Endothelial cell of umbilical vein (primary cell): ENCODE measurements at regions of chr1 and their contacts with region 1.

Region 1: GRCh38 chr1:196660852-196661251 is 9.0 kb downstream of the CFH start:
- DNase-seq: peak; percentile 53
- H3K4me3 ChIP-seq: peak overlapping the region in 1 of 3 experiments; percentile 52
- H3K27ac ChIP-seq: no peak overlapping the region
- H3K4me1 ChIP-seq: no peaks in the 10 kb centered on the region
- H3K27me3 ChIP-seq: no peaks in the 10 kb centered on the region
- CTCF ChIP-seq: peak in 1 of 2 donors; percentile 4
- POLR2A ChIP-seq: no peak

Region 2: GRCh38 chr1:196317535-196318522 is 343.0 kb before region 1 on chr1:
- CTCF ChIA-PET with region 1: interaction called, 98 read pairs
- POLR2A ChIA-PET with region 1: no interaction called
- dilution Hi-C with region 1: no loop called
- intact Hi-C with region 1: loop called (anchors 1 kb)
- DNase-seq: peak; percentile 62
- H3K4me3 ChIP-seq: no peak overlapping the region
- H3K27ac ChIP-seq: no peak overlapping the region
- H3K4me1 ChIP-seq: no peaks in the 10 kb centered on the region
- H3K27me3 ChIP-seq: no peaks in the 10 kb centered on the region
- CTCF ChIP-seq: peak; percentile 47 to 62
- POLR2A ChIP-seq: no peak

Region 3: DNA sequence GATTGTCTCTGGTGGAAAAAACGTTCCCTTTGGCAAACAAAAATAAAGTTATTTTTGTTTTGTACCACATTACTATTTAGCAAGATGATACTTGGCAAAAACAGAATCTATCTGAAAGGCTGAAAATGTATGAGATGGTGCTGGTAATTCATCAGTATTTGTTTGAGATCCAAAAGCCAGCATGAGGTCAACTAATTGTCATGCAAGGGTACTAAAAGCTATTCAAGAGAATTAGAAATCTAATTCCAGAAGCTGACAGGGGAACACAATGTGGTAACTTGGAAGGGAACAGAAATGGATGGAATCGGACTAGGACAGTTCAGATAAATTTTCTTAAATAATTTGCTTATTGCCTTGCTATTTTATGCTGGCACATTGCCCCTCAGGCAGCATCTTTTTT is 316.4 kb before region 1 on chr1:
- CTCF ChIA-PET with region 1: interaction called, 10 read pairs
- POLR2A ChIA-PET with region 1: no interaction called
- dilution Hi-C with region 1: no loop called
- intact Hi-C with region 1: no loop called
- DNase-seq: no peak
- H3K4me3 ChIP-seq: no peak overlapping the region
- H3K27ac ChIP-seq: no peak overlapping the region
- H3K4me1 ChIP-seq: no peaks in the 10 kb centered on the region
- H3K27me3 ChIP-seq: no peaks in the 10 kb centered on the region
- CTCF ChIP-seq: no peak
- POLR2A ChIP-seq: no peak

Region 4: DNA sequence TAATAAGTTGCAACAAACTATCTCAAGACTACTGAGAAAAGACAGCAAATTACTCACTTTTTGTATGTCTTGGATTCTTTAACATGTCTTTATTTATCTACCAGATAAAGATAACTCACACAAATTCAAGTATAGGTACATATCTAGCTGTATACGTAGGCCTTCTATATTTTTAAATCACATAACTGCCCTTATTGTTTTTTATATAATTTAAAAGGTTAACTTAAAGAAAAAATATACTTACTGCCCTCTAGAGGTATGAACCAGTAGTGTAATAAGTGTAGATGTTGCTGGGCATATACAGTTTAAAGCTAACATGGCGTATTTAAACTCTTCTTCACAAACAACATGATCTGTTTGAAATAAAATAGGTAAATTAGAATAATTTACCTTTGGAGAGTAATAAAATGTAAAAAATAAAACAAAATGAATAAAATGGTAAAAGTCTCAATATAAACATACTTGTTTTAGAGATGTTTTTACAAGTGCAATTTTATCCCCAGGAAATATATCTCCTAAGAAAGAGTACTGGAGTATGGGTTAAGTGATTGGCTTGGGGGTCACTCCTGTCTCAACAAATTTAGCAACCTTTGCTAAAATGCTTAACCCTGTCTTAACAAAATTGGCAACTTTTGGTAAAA is 287.8 kb before region 1 on chr1:
- CTCF ChIA-PET with region 1: interaction called, 13 read pairs
- POLR2A ChIA-PET with region 1: no interaction called
- dilution Hi-C with region 1: no loop called
- intact Hi-C with region 1: no loop called
- DNase-seq: peak; percentile 54
- H3K4me3 ChIP-seq: no peak overlapping the region
- H3K27ac ChIP-seq: no peak overlapping the region
- H3K4me1 ChIP-seq: no peaks in the 10 kb centered on the region
- H3K27me3 ChIP-seq: no peaks in the 10 kb centered on the region
- CTCF ChIP-seq: peak; percentile 18 to 22
- POLR2A ChIP-seq: no peak

Region 5: GRCh38 chr1:196558424-196558823 is 102.4 kb before region 1 on chr1:
- CTCF ChIA-PET with region 1: interaction called, 4 read pairs
- POLR2A ChIA-PET with region 1: no interaction called
- dilution Hi-C with region 1: no loop called
- intact Hi-C with region 1: loop called (anchors 5 kb)
- DNase-seq: peak; percentile 71
- H3K4me3 ChIP-seq: peak overlapping the region in 2 of 3 experiments; percentile 83
- H3K27ac ChIP-seq: peak overlapping the region; percentile 29
- H3K4me1 ChIP-seq: no peaks in the 10 kb centered on the region
- H3K27me3 ChIP-seq: no peaks in the 10 kb centered on the region
- CTCF ChIP-seq: no peak
- POLR2A ChIP-seq: no peak

Region 6: GRCh38 chr1:196684476-196684875 is 23.6 kb after region 1 on chr1:
- CTCF ChIA-PET with region 1: no interaction called
- POLR2A ChIA-PET with region 1: no interaction called
- dilution Hi-C with region 1: no loop called
- intact Hi-C with region 1: no loop called
- DNase-seq: no peak
- H3K4me3 ChIP-seq: no peak overlapping the region
- H3K27ac ChIP-seq: no peak overlapping the region
- H3K4me1 ChIP-seq: peaks cover 5% of the 10 kb centered on the region
- H3K27me3 ChIP-seq: no peaks in the 10 kb centered on the region
- CTCF ChIP-seq: no peak
- POLR2A ChIP-seq: no peak